ENCODE measurements at regions of chrX and their contacts with region 1.

Region 1: DNA sequence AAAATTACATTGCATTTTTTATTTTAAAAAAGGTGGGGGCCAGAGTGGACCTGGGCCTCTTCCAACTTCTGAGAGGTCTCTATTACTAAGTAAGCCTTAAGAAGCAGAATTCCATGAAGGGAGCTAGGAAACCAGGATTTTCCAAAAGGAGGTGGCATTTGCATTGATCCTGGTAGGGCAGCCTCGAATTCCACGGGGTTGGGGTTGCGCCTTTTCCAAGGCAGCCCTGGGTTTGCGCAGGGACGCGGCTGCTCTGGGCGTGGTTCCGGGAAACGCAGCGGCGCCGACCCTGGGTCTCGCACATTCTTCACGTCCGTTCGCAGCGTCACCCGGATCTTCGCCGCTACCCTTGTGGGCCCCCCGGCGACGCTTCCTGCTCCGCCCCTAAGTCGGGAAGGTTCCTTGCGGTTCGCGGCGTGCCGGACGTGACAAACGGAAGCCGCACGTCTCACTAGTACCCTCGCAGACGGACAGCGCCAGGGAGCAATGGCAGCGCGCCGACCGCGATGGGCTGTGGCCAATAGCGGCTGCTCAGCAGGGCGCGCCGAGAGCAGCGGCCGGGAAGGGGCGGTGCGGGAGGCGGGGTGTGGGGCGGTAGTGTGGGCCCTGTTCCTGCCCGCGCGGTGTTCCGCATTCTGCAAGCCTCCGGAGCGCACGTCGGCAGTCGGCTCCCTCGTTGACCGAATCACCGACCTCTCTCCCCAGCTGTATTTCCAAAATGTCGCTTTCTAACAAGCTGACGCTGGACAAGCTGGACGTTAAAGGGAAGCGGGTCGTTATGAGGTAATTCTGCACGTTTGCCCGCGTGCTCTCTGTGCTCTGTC is at the start of gene PGK1:
- DNase-seq: peak; percentile 95
- H3K4me3 Mint-ChIP-seq: peak within 1 kb of the TSS; percentile 95
- H3K27ac Mint-ChIP-seq: peak within 1 kb of the TSS; percentile 92
- H3K4me1 Mint-ChIP-seq: peaks cover 28% of the 10 kb centered on the region
- H3K27me3 Mint-ChIP-seq: no peaks in the 10 kb centered on the region
- total RNA-seq, gene PGK1: 744 to 766 TPM

Region 2: GRCh38 chrX:77962068-77962902 is 141.6 kb before region 1 on chrX:
- CTCF ChIA-PET with region 1: no interaction called
- intact Hi-C with region 1: loop called (anchors 5 kb)
- DNase-seq: peak; percentile 14
- H3K4me3 Mint-ChIP-seq: peak overlapping the region; percentile 75
- H3K27ac Mint-ChIP-seq: peak overlapping the region; percentile 93
- H3K4me1 Mint-ChIP-seq: peaks cover 44% of the 10 kb centered on the region
- H3K27me3 Mint-ChIP-seq: no peaks in the 10 kb centered on the region

Region 3: DNA sequence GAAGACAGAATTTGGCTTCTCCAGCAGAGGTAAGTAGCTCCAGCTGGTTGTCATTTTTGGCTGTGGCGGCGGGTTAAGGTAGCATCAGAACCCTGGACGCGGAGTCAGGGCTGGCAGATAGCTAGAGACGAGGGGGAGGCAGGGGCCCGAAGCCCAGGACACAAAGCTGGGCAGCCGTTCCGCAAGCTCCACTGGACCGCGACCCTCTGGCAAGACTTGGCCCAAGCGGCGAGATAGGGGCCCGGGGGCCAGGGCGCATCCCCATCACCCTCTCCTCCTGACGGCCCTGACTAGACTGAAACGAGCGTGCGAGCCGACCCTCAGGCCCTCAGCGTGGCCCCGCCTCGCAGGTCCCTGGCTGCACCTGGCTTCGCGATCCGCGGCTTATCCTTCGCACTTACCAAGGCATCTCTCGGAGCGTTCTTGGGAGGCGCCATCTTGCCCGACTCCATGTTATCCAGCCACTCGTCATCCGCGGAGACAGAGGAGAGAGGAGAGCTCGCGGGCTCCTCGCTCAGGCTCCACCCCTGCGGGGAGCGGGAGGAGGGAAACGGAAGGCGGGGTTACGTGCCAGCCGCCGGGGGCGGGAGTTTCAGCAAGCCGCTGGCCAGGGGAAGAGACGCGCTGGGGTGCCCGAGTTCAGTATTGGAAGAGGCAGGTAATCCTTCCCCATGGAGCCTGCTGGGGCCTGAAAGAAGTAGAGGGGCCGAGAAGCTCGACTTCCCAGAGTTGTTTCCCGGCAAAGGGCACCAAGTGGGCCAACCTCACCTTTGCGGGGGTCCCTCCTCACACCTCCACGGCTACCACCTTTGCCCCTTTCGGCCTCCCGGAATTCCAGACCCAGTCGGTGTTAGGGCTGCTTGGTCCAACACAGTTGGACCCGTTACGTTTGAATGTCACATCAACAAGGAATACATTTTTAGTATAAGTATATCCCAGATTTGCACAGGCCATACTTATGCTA is 35.6 kb after region 1 on chrX and contains the start of gene TAF9B:
- CTCF ChIA-PET with region 1: interaction called, 3 read pairs
- intact Hi-C with region 1: loop called (anchors 1 kb)
- DNase-seq: peak; percentile 89
- H3K4me3 Mint-ChIP-seq: peak within 1 kb of the TSS; percentile 89
- H3K27ac Mint-ChIP-seq: peak within 1 kb of the TSS; percentile 90
- H3K4me1 Mint-ChIP-seq: peaks cover 4% of the 10 kb centered on the region
- H3K27me3 Mint-ChIP-seq: no peaks in the 10 kb centered on the region
- total RNA-seq, gene TAF9B: 25.9 to 27.2 TPM

Region 4: DNA sequence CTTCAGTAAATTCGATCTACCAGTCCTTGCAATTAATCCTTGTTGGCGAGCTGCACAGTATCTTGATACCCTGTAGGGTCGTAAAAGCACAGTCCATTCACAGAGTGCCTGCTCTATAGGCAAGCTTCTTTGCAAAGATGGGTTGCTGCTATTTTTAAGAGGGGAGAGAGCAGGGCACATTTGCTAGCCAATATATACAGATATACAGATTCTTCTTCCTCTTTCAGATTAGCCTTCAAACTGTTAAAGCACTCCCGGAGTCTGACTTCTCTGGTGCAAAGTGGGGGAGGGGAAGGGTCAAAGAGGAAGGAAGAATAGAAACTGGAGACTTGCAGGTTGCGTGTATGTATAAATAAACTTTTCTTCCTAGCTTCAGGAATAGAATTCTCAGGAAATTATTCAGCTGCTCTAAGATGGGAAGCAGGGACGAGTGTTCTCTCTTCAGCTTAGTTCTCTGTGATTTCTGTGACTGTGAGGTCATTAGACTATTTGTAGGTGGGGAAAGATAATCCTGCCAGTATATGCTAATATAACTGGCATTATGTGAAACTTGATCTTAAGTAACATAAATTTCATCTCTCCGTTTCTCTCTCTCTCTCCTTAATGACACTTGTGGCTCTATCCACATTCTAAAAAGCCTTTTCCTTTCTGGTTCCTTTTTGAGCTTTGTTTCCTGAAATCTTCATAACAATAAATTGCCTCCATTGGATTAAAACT is 223.7 kb after region 1 on chrX and contains the start of gene CYSLTR1:
- CTCF ChIA-PET with region 1: no interaction called
- intact Hi-C with region 1: loop called (anchors 1 kb)
- DNase-seq: no peak
- H3K4me3 Mint-ChIP-seq: peak within 1 kb of the TSS; percentile 71
- H3K27ac Mint-ChIP-seq: peak within 1 kb of the TSS; percentile 85
- H3K4me1 Mint-ChIP-seq: peaks cover 58% of the 10 kb centered on the region
- H3K27me3 Mint-ChIP-seq: no peaks in the 10 kb centered on the region
- total RNA-seq, gene CYSLTR1: 2.1 to 2.2 TPM

Region 5: DNA sequence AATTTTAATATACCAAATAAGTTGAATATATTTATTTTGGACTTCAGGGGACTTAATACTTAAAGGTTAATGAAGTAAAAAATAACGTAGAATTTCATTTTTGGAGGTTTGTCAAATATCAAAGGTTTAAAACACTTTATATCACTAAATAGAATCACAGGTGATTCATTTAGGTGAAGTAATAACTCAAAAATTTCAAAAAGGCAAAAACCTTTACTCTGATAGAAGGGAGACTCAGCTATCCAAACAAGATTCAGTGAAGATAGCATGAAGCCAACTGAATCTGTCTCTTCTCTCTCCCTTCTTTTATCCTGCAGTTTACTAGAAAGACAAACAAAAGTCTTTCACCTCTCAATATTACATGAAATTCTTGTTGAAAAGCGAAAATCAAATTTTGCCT is 333.8 kb after region 1 on chrX:
- CTCF ChIA-PET with region 1: no interaction called
- intact Hi-C with region 1: no loop called
- DNase-seq: no peak
- H3K4me3 Mint-ChIP-seq: no peak overlapping the region
- H3K27ac Mint-ChIP-seq: no peak overlapping the region
- H3K4me1 Mint-ChIP-seq: no peaks in the 10 kb centered on the region
- H3K27me3 Mint-ChIP-seq: no peaks in the 10 kb centered on the region